PC-9 (cell line): ENCODE measurements at regions of chr13 and their contacts with region 1.

Region 1: DNA sequence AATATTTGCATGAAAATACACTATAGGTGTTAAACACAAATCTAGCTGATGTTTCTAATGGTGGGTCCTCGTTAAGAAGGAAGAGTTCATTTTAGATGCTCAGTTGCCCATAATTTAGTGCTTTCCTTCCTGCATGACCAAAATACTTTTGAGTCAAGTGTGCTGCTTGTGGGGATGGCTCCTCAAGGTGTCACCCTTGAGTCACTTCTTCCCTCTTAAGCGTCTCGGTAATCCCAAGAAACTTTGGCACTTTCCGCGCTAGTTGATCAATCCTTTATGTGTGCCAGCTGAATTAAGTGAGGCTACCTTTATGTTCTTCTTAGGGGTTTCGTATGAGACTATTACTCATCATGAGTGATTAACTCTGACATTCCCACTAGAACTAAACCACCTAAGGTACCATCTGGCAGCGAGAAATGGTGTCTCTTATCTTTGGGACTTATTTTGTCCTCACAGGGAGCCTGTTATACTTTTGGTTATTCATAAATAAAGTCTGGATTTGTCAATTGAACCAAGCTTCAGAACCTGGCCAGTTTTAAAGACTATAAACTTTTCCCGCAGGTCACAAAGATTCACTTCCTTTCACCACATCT is 106.8 kb downstream of the NHLRC3 start:
- DNase-seq: peak in 1 of 2 experiments; percentile 30
- H3K4me3 ChIP-seq: no peak overlapping the region
- H3K27ac ChIP-seq: no peak overlapping the region
- H3K4me1 ChIP-seq: no peaks in the 10 kb centered on the region; the same call in 1 of the 2 replicates
- H3K27me3 ChIP-seq: peaks cover 11% of the 10 kb centered on the region
- CTCF ChIP-seq: peak; percentile 67

Region 2: DNA sequence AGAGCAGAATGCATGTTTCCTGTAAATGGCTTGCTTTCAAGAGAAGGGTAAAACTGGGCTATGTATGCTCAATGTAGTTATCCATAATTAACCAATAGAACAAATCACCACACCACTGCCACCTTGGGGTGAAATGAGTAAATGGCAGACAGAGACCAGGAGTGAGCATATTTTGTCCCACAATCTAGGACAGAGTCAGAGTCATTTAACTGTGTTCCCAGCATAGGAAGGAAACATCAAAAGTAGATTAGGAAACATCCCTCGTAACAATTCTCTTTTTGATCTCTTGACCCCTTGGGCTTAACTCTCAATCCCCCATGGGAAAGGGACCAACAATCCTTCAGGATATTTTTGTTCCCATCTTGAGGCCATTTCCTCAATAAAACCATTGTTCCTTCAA is 118.0 kb after region 1 on chr13:
- CTCF ChIA-PET with region 1: no interaction called
- POLR2A ChIA-PET with region 1: no interaction called
- intact Hi-C with region 1: loop called (anchors 5 kb)
- DNase-seq: peak in 1 of 2 experiments; percentile 2
- H3K4me3 ChIP-seq: no peak overlapping the region
- H3K27ac ChIP-seq: no peak overlapping the region
- H3K4me1 ChIP-seq: no peaks in the 10 kb centered on the region
- H3K27me3 ChIP-seq: no peaks in the 10 kb centered on the region
- CTCF ChIP-seq: peak; percentile 70

Region 3: GRCh38 chr13:39406688-39407087 is 261.7 kb after region 1 on chr13:
- CTCF ChIA-PET with region 1: no interaction called
- POLR2A ChIA-PET with region 1: no interaction called
- intact Hi-C with region 1: no loop called
- DNase-seq: no peak
- H3K4me3 ChIP-seq: no peak overlapping the region
- H3K27ac ChIP-seq: no peak overlapping the region
- H3K4me1 ChIP-seq: no peaks in the 10 kb centered on the region
- H3K27me3 ChIP-seq: no peaks in the 10 kb centered on the region
- CTCF ChIP-seq: 0 out of 2 replicates have a peak, but pooled peaks have one; percentile 4

Region 4: GRCh38 chr13:39676315-39676876 is 531.4 kb after region 1 on chr13:
- CTCF ChIA-PET with region 1: no interaction called
- POLR2A ChIA-PET with region 1: no interaction called
- intact Hi-C with region 1: loop called (anchors 2 kb)
- DNase-seq: no peak
- H3K4me3 ChIP-seq: no peak overlapping the region
- H3K27ac ChIP-seq: no peak overlapping the region
- H3K4me1 ChIP-seq: no peaks in the 10 kb centered on the region; the same call in 1 of the 2 replicates
- H3K27me3 ChIP-seq: no peaks in the 10 kb centered on the region
- CTCF ChIP-seq: peak; percentile 71